ENCODE measurements at regions of chr5 and their contacts with region 1.

Region 1: DNA sequence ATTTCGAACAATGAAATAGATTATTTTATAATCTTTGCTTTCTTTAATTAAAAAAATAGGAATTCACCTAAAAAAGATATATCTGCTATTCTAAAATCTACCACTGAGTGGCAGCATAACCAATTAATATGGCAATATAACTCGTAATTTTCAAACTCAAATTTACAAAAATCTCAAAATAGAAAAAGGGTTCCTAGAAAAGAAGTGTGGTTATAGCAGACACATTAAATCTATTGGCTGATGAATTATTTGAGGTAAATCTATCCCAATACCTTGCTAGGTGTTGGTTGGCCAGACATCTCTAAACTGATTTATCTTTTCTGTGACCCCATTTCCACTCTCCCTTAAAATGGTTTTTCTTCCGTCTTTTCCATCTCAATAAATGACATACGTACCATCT is 30.2 kb upstream of the NRG2 start:
- DNase-seq: no peak
- ATAC-seq: peak in 1 of 4 donors; percentile 32
- H3K4me3 ChIP-seq: no peak overlapping the region
- H3K27ac ChIP-seq: no peak overlapping the region
- H3K4me1 ChIP-seq: peaks cover 5% of the 10 kb centered on the region
- H3K27me3 ChIP-seq: no peaks in the 10 kb centered on the region
- CTCF ChIP-seq: peak; percentile 76

Region 2: GRCh38 chr5:140104100-140104499 is 30.8 kb after region 1 on chr5:
- intact Hi-C with region 1: loop called in 1 of 2 experiments (anchors 2 kb)
- DNase-seq: no peak
- ATAC-seq: no peak
- H3K4me3 ChIP-seq: no peak overlapping the region
- H3K27ac ChIP-seq: no peak overlapping the region
- H3K4me1 ChIP-seq: peaks cover 16% of the 10 kb centered on the region
- H3K27me3 ChIP-seq: no peaks in the 10 kb centered on the region
- CTCF ChIP-seq: no peak

Region 3: DNA sequence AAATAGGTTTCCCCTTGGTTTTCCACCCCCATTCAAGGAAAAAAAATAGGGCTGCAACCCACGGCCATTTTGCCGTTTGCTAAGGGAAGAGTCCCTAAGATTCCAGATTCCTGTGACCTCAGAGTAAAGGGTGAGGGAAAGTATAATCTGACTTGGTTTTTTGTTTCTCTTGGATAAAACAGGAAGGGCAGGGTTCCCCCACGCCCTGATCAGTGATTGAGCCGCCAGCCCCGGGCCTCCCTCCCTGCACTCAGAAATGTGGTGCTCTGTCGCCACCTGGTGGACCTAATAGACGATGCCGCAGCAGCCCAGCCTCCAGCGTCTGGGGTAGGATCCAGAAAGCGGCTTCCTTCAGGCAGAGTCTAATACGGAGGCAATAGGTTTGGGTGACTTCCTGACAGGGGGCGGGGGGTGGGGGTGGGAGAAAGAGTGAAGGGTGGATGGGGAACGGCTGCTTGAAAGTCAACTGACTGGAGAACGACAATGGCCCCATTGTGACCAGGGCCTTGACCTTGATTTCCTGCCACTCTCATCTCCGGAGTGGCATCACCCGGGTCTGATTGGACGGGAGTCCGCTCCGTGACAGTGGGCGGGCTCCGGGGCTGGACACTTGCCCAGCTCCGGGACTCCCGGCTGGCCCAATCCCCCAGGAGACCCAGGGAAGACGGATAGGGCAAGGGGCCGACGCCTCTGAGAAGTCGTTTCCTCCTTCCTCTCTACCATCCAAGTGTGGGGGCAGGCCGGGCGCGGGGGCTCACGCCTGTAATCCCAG is 83.9 kb after region 1 on chr5:
- intact Hi-C with region 1: loop called (anchors 1 to 5 kb)
- DNase-seq: peak; percentile 87 to 93
- ATAC-seq: peak; percentile 95 to 97 (median 96)
- H3K4me3 ChIP-seq: peak overlapping the region; percentile 55
- H3K27ac ChIP-seq: no peak overlapping the region
- H3K4me1 ChIP-seq: peaks cover 3% of the 10 kb centered on the region
- H3K27me3 ChIP-seq: no peaks in the 10 kb centered on the region
- CTCF ChIP-seq: peak; percentile 91

Region 4: GRCh38 chr5:140357726-140358093 is 284.4 kb after region 1 on chr5:
- intact Hi-C with region 1: loop called in 1 of 2 experiments (anchors 10 kb)
- DNase-seq: peak; percentile 82 to 88
- ATAC-seq: peak; percentile 94 to 97 (median 94)
- H3K4me3 ChIP-seq: peak overlapping the region; percentile 48
- H3K27ac ChIP-seq: no peak overlapping the region
- H3K4me1 ChIP-seq: peaks cover 5% of the 10 kb centered on the region
- H3K27me3 ChIP-seq: no peaks in the 10 kb centered on the region
- CTCF ChIP-seq: peak; percentile 88

Measured in psoas muscle (tissue), 8 donors.